ENCODE measurements at regions of chr6 and their contacts with region 1.

Region 1: DNA sequence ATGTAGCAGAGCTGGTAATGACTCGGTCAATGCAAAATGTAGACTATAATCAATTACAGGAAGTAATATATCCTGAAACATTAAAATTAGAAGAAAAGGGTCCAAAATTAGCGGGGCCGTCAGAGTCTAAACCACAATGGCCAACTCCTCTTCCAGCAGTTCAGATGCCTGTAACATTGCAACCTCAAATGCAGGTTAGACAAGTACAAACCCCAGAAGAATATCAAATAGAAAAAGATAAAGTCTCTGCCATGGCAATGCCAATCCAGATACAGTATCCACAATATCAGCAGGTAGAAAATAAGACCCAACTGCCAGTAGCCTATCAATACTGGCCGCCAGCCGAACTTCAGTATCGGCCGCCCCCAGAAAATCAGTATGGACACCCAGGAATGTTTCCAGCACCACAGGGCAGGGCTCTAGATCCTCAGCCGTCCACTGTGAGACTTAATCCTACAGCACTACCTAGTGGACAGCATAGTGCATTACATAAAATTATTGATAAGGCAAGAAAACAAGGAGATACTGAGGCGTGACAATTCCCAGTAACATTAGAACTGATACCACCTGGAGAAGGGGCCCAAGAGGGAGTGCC is 158.4 kb downstream of the GPX5 start:
- DNase-seq: no peak
- ATAC-seq: no peak

Region 2: DNA sequence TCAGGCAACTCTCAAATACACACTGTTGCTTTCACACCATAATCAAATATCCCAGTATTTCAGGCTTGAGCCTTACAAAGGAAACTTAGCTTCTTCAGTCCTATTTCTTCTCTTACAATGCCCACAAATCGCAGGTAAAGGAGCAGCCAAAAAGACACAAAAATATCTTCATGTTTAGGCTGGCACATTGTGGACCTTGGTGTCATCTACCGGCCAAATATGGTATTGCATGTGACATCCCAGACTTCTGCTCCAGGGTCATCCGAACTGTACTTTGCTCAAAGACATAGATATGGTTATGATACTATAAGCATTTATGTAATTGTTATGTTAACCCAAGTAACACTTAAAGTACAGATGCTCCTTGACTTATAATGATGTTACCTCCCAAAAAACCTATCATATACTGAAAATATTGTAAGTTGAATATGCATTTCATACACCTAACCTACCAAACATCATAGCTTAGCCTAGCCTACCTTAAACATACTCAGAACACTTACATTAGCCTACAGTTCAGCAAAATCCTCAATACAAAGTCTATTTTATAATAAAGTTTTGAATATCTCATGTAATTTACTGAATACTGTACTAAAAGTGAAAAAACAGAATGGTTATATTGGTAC is 905.5 kb after region 1 on chr6:
- intact Hi-C with region 1: loop called (anchors 5 kb)
- DNase-seq: no peak
- ATAC-seq: peak; percentile 73

Measured in Right ventricle myocardium superior (tissue), 1 donor.